ENCODE measurements at regions of chr10 and their contacts with region 1.

Region 1: DNA sequence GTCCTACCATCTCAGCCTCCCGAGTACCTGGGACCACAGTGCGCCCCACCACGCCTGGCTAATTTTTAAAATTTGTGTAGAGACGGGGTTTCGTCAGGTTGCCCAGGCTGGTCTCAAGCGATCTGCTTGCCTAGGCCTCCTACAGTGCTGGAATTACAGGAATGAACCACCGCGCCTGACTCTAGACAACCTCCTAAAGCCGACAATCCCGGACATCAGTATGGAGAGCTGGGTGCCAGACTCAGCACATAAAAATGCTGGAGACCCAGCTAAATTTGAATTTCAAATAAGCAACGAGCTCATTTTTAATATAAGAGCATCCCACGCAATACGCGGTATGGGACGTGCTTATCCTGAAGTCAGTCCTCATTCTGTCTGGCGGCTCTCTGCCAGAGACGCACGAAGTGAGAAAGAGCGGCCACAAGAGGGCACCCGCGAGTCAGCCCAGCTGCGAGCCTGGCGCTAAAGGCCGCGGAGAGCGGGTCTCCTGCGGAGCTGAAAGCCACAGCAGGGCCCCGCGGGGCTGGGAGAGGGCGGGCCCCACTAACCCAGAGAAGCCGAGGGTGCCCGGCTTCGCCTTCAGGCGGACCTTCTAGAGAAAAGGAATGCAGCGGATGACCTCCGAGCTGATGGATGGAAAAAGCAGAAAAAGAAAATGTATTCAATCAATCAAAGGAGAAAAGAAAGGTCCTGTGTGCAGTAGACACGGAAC is 7.0 kb downstream of the CALY start:
- H3K4me3 Mint-ChIP-seq: peak overlapping the region; percentile 68
- H3K27ac Mint-ChIP-seq: no peak overlapping the region
- H3K4me1 Mint-ChIP-seq: peaks cover 28% of the 10 kb centered on the region
- H3K27me3 Mint-ChIP-seq: peaks cover 86% of the 10 kb centered on the region

Region 2: DNA sequence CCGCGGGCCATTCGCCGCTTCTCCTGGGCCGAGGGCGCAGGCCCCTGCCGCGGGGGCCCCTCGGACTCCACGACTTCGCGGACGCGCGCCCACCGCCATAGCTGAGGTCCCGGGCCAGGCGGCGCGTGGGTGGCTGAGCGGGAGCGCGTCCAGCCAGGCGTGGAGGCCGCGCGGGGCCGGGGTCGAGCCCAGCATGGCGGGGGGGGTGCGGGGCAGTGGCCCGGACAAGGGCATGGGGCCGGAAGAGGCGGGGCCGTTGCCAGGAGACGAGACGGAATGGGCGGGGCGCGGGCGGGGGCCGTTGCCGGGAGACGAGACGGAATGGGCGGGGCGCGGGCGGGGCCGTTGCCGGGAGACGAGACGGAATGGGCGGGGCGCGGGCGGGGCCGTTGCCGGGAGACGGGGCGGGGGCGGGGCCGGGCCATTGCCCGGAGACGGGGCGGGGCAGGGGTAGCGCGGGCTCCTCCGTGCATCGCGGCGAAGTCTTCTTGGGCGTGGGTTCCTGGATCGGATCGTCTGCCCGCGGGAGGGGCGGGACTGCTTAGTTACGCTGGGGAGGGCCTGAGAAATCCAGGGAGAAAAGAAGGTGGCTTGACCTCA is 67.8 kb before region 1 on chr10:
- intact Hi-C with region 1: no loop called
- H3K4me3 Mint-ChIP-seq: peak overlapping the region; percentile 76
- H3K27ac Mint-ChIP-seq: peak overlapping the region; percentile 100
- H3K4me1 Mint-ChIP-seq: peaks cover 89% of the 10 kb centered on the region
- H3K27me3 Mint-ChIP-seq: no peaks in the 10 kb centered on the region

Region 3: GRCh38 chr10:133516057-133516456 is 186.4 kb after region 1 on chr10:
- intact Hi-C with region 1: loop called (anchors 5 kb)
- H3K4me3 Mint-ChIP-seq: no peak overlapping the region
- H3K27ac Mint-ChIP-seq: no peak overlapping the region
- H3K4me1 Mint-ChIP-seq: no peaks in the 10 kb centered on the region
- H3K27me3 Mint-ChIP-seq: peaks cover 45% of the 10 kb centered on the region